Activated CD4-positive, alpha-beta memory T cell treated with anti-CD3 and anti-CD28 coated beads for 36 hours (primary cell): ENCODE measurements at regions of chr20 and their contacts with region 1.

Region 1: GRCh38 chr20:58169450-58169849 is 59.0 kb downstream of the ANKRD60 start:
- DNase-seq: no peak
- H3K4me3 Mint-ChIP-seq: no peak overlapping the region
- H3K27ac Mint-ChIP-seq: no peak overlapping the region
- H3K4me1 Mint-ChIP-seq: peaks cover 9% of the 10 kb centered on the region
- H3K27me3 Mint-ChIP-seq: no peaks in the 10 kb centered on the region

Region 2: GRCh38 chr20:57990396-57990987 is 179.0 kb before region 1 on chr20:
- CTCF ChIA-PET with region 1: no interaction called
- POLR2A ChIA-PET with region 1: no interaction called
- intact Hi-C with region 1: no loop called
- DNase-seq: no peak
- H3K4me3 Mint-ChIP-seq: no peak overlapping the region
- H3K27ac Mint-ChIP-seq: no peak overlapping the region
- H3K4me1 Mint-ChIP-seq: no peaks in the 10 kb centered on the region
- H3K27me3 Mint-ChIP-seq: peaks cover 6% of the 10 kb centered on the region

Region 3: DNA sequence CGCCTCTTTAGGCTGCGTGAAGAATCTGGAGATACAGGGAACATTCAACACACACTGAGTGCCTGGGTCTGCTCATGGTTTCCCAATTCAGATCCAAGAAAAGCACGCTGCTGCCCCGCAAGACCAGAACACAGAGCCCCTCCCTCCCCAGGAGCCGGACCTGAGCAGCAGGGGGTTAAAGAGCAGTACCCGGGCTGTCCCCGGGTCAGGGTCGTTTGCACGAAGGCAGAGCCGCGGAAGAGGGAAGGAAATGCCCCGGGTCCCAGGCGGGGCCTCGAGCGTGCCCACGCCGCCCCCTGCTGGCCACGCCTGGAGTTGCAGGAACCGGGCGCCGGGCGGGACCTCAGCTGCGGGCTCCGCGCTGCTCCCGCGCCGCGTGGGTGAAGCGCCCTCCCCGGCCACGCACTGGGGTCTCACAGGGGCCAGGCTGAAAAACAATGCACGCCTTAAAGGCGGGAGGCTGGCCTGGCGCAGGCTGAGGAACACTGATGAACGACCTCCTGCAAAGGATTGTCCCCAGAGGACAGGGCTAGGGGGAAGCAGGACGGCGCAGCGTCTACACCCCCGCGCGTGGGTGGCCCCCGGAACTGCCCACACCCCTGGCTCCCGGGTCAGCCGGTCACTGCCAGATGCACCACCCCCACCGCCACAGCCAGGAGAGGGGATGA is 10.1 kb after region 1 on chr20:
- CTCF ChIA-PET with region 1: interaction called, 10 read pairs
- POLR2A ChIA-PET with region 1: no interaction called
- intact Hi-C with region 1: no loop called
- DNase-seq: peak; percentile 70
- H3K4me3 Mint-ChIP-seq: no peak overlapping the region
- H3K27ac Mint-ChIP-seq: no peak overlapping the region
- H3K4me1 Mint-ChIP-seq: peaks cover 3% of the 10 kb centered on the region
- H3K27me3 Mint-ChIP-seq: peaks cover 13% of the 10 kb centered on the region